ENCODE measurements at regions of chr6 and their contacts with region 1.

Region 1: DNA sequence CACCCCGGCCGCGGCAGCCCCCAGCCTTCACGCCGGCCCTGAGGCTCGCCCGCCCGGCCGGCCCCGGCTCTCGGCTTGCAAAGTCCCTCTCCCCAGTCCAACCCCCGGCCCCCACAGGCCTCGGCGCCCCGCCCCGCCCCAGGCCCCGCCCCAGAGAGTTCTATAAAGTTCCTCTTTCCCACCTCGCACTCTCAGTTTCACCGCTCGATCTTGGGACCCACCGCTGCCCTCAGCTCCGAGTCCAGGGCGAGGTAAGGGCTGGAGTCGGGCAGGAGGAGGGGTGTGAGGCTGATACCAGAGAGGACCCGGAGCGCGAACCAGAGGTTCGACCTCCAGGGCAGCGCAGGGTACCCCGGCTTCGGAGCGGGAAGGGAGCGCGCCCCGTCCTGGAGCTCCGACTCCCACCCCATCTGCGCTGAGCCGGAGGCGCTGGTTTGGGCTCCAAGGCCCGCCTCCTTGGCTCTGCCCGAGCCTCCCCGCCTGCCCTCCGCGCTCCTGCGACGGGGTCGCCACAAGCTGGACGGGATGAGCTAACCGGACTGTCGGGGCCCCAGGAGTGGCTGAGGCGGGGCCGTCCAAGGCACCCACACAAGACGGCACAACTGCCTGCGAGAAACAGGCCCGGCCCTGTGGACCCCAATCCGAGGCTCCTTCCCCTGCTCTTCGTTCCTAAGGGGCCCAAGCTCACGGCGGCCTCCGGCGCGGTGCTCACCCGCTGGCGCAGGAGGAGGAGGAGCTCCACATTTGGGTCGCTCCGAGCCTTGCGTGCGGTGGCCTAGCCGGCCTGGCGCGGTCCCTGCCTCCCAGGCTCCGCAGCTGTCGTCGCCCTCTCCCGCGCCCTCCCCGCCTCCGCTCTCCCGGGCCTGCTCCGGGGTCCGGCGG is at the start of gene IRF4:
- DNase-seq: peak; percentile 81
- ATAC-seq: peak; percentile 51
- H3K4me3 Mint-ChIP-seq: peak within 1 kb of the TSS; percentile 98
- H3K27ac Mint-ChIP-seq: peak within 1 kb of the TSS; percentile 94
- H3K4me1 Mint-ChIP-seq: peaks cover 40% of the 10 kb centered on the region
- H3K27me3 Mint-ChIP-seq: peaks cover 2% of the 10 kb centered on the region
- total RNA-seq, gene IRF4: 94.2 to 95.1 TPM

Region 2: GRCh38 chr6:188821-189655 is 202.8 kb before region 1 on chr6:
- POLR2A ChIA-PET with region 1: interaction called, 54 read pairs
- DNase-seq: peak; percentile 81
- ATAC-seq: peak; percentile 91
- H3K4me3 Mint-ChIP-seq: peak overlapping the region; percentile 23
- H3K27ac Mint-ChIP-seq: peak overlapping the region; percentile 74
- H3K4me1 Mint-ChIP-seq: peaks cover 34% of the 10 kb centered on the region
- H3K27me3 Mint-ChIP-seq: no peaks in the 10 kb centered on the region

Region 3: GRCh38 chr6:336159-337019 is 55.4 kb before region 1 on chr6:
- POLR2A ChIA-PET with region 1: interaction called, 94 read pairs
- DNase-seq: no peak
- ATAC-seq: peak; percentile 44
- H3K4me3 Mint-ChIP-seq: peak overlapping the region; percentile 91
- H3K27ac Mint-ChIP-seq: peak overlapping the region; percentile 87
- H3K4me1 Mint-ChIP-seq: peaks cover 51% of the 10 kb centered on the region
- H3K27me3 Mint-ChIP-seq: no peaks in the 10 kb centered on the region

Region 4: GRCh38 chr6:446418-447366 is 54.9 kb after region 1 on chr6:
- POLR2A ChIA-PET with region 1: interaction called, 63 read pairs
- DNase-seq: peak; percentile 83
- ATAC-seq: peak; percentile 72
- H3K4me3 Mint-ChIP-seq: peak overlapping the region; percentile 63
- H3K27ac Mint-ChIP-seq: peak overlapping the region; percentile 94
- H3K4me1 Mint-ChIP-seq: peaks cover 40% of the 10 kb centered on the region
- H3K27me3 Mint-ChIP-seq: no peaks in the 10 kb centered on the region

Region 5: GRCh38 chr6:490251-491037 is 98.6 kb after region 1 on chr6:
- POLR2A ChIA-PET with region 1: interaction called, 63 read pairs
- DNase-seq: no peak
- ATAC-seq: peak; percentile 38
- H3K4me3 Mint-ChIP-seq: peak overlapping the region; percentile 67
- H3K27ac Mint-ChIP-seq: peak overlapping the region; percentile 91
- H3K4me1 Mint-ChIP-seq: peaks cover 68% of the 10 kb centered on the region
- H3K27me3 Mint-ChIP-seq: no peaks in the 10 kb centered on the region

Region 6: GRCh38 chr6:514396-514973 is 122.7 kb after region 1 on chr6:
- POLR2A ChIA-PET with region 1: interaction called, 11 read pairs
- DNase-seq: no peak
- ATAC-seq: no peak
- H3K4me3 Mint-ChIP-seq: peak overlapping the region; percentile 18
- H3K27ac Mint-ChIP-seq: peak overlapping the region; percentile 76
- H3K4me1 Mint-ChIP-seq: peaks cover 38% of the 10 kb centered on the region
- H3K27me3 Mint-ChIP-seq: no peaks in the 10 kb centered on the region

Region 7: GRCh38 chr6:692855-693722 is 301.3 kb after region 1 on chr6 and contains the start of gene EXOC2:
- POLR2A ChIA-PET with region 1: interaction called, 11 read pairs
- DNase-seq: peak; percentile 91
- ATAC-seq: peak; percentile 74
- H3K4me3 Mint-ChIP-seq: peak within 1 kb of the TSS; percentile 97
- H3K27ac Mint-ChIP-seq: peak within 1 kb of the TSS; percentile 96
- H3K4me1 Mint-ChIP-seq: peaks cover 27% of the 10 kb centered on the region
- H3K27me3 Mint-ChIP-seq: no peaks in the 10 kb centered on the region
- total RNA-seq, gene EXOC2: 31.9 to 35.4 TPM

Measured in activated naive CD8-positive, alpha-beta T cell treated with anti-CD3 and anti-CD28 coated beads, Interleukin-2, amount 10 ng/mL, durations not matched to agents 7 days and 5 days (primary cell).